ENCODE measurements at regions of chr6 and their contacts with region 1.

Region 1: DNA sequence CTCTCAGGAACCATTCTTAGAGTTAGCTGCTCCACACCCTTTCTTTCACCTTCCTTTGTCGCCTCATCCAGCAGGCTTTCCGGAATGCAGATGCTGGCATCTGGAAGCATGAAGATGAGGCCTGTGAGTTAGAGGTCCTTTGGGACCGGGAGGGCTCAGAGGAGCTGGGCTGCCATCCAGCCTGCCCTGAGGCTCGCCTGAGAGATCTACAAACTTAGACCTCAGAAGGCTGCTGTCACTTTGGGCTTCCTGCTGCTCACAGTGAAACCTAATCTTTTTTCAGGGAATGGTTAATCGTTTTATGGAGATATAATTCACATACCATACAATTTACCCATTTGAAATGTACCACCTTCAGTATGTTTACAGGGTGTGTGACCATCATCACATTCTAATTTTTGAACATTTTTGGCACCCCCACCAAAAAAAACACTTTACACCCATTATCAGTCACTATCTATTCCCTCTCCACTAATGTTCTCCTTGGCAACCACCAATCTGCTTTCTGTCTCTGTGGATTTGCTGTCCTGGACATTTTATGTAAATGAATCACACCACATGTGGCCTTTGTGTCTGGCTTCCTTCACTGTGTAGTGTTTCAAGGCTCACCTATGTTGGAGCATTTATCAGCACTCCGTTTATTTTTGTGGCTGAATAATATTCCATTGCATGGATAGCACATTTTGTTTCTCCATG is 20.0 kb upstream of the MPC1 start:
- DNase-seq: no peak
- H3K4me3 ChIP-seq: no peak overlapping the region
- H3K27ac ChIP-seq: no peak overlapping the region
- H3K4me1 ChIP-seq: peaks cover 0 to 5% (median 0%) of the 10 kb centered on the region in 3 donors
- H3K27me3 ChIP-seq: peaks cover 0 to 12% (median 0%) of the 10 kb centered on the region in 4 donors
- CTCF ChIP-seq: no peak
- POLR2A ChIP-seq: no peak

Region 2: DNA sequence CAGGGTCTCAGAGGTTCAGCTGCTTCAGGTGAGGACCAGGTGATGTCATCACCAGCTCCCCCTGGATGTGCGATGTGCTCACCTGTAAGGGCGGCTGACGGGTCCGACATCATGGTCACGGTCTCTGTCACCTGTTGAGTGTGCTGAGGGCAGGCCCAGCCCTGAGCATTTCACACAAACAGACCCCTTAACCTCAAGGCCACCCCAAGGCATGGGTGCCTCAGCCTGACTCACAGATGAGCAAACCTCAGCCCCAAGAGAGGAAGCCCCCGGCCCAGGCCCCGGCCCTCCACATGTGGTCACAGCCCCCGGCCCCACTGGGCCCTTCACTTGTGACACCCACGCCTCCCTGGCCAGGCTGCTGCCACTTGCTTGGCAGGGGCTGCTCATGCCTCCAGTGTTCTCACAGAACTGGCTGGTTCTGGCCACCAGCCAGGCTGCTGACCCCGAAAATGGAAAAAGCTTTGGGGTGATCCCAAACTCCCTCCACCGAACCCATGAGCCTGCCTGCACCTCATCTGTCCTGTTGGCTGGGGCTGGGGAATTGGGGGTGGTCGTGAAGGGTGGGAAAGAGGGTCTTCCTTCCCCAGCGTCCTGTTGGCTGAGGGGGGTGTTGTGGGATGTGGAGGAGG is 127.9 kb before region 1 on chr6:
- intact Hi-C with region 1: loop called (anchors 5 kb)
- DNase-seq: no peak
- H3K4me3 ChIP-seq: no peak overlapping the region
- H3K27ac ChIP-seq: no peak overlapping the region
- H3K4me1 ChIP-seq: peaks cover 0 to 8% (median 0%) of the 10 kb centered on the region in 3 donors
- H3K27me3 ChIP-seq: peaks cover 0 to 41% (median 0%) of the 10 kb centered on the region in 4 donors
- CTCF ChIP-seq: no peak
- POLR2A ChIP-seq: no peak